IMR-90 (cell line): ENCODE measurements at regions of chr2 and their contacts with region 1.

Region 1: GRCh38 chr2:102020596-102021181 is 28.9 kb downstream of the IL1R2 start:
- DNase-seq: peak; percentile 88
- ATAC-seq: peak; percentile 99
- H3K4me3 ChIP-seq: no peak overlapping the region
- H3K27ac ChIP-seq: peak overlapping the region; percentile 31; the same call in 1 of the 2 replicates
- H3K4me1 ChIP-seq: peaks cover 9% of the 10 kb centered on the region; the same call in 1 of the 2 replicates
- H3K27me3 ChIP-seq: no peaks in the 10 kb centered on the region
- CTCF ChIP-seq: peak; percentile 99
- POLR2A ChIP-seq: peak; percentile 62
- RAD21 ChIP-seq: peak; percentile 99

Region 2: DNA sequence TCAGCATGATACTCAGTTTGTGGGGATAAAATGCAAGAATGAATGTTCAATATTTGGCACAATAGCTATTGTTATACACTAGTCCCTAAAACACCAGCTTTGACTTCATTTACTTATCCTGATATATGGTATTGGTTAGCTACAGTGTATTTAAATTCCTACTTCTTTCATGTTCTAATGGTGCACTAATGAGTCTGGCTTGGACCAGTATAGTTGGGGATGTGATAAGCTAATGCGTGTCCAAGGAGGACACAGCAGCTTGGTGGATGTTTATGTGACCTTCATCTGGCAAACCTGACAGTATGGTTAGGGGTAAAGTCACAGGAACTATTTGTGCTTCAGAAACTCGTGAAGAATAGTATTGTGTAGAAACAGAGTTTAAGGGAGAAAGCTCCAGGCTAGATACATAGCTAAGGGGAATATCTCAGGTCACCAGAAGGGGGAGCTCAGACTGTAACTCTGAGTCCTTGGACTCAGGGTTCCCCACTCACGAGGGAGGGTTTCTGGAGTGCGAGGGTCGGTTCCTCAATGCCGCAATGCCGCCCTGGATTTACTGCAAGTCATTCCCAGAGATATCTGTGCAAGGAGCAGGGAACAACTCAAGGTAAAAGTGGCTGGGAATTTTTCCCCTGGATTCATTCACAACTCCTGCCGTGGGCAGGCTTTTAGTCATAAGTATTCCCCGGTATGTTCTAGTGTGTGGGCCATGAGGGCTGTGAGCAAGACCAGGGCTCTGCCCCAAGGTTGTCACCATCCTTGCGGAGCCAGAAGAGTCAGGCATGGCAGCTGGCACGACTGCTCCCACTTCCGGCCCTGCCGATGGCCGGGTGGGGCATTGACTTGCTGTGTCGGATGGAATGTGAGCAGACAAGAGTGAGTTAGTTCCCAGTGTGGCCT is 14.5 kb before region 1 on chr2:
- CTCF ChIA-PET with region 1: interaction called, 14 read pairs
- POLR2A ChIA-PET with region 1: no interaction called
- dilution Hi-C with region 1: no loop called
- in situ Hi-C with region 1: no loop called
- intact Hi-C with region 1: no loop called
- DNase-seq: peak; percentile 56
- ATAC-seq: peak; percentile 97
- H3K4me3 ChIP-seq: no peak overlapping the region
- H3K27ac ChIP-seq: no peak overlapping the region
- H3K4me1 ChIP-seq: no peaks in the 10 kb centered on the region
- H3K27me3 ChIP-seq: peaks cover 5% of the 10 kb centered on the region; the same call in 1 of the 2 replicates
- CTCF ChIP-seq: peak; percentile 68
- POLR2A ChIP-seq: no peak
- RAD21 ChIP-seq: peak; percentile 73

Region 3: DNA sequence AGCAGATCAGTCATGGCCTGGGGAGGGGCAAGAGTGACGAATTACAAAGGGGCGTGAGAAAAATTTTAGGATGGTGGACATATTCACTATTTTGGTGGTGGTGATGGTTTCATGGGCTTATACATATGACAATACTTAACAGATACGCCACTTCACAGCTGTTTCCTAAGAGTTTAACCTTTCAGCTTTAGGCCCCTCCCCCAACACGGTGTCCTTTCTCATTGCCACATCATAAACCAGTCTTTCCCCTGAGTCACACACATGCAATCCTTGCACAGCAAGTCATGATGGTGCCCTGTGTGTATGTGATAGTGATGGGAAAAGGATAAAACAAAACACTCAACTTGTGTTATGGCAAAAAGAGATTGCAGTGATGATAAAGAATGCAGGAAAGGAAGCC is 74.2 kb after region 1 on chr2:
- CTCF ChIA-PET with region 1: no interaction called
- POLR2A ChIA-PET with region 1: no interaction called
- dilution Hi-C with region 1: no loop called
- in situ Hi-C with region 1: no loop called
- intact Hi-C with region 1: no loop called
- DNase-seq: peak; percentile 98
- ATAC-seq: peak; percentile 99
- H3K4me3 ChIP-seq: no peak overlapping the region
- H3K27ac ChIP-seq: no peak overlapping the region; the same call in 1 of the 2 replicates
- H3K4me1 ChIP-seq: peaks cover 2% of the 10 kb centered on the region; the same call in 1 of the 2 replicates
- H3K27me3 ChIP-seq: no peaks in the 10 kb centered on the region
- CTCF ChIP-seq: no peak
- POLR2A ChIP-seq: no peak
- RAD21 ChIP-seq: peak; percentile 28; the same call in 1 of the 2 replicates

Region 4: GRCh38 chr2:102122110-102122509 is 101.4 kb after region 1 on chr2:
- CTCF ChIA-PET with region 1: interaction called, 3 read pairs
- POLR2A ChIA-PET with region 1: no interaction called
- dilution Hi-C with region 1: no loop called
- in situ Hi-C with region 1: no loop called
- intact Hi-C with region 1: loop called (anchors 5 kb)
- DNase-seq: peak; percentile 95
- ATAC-seq: peak; percentile 91
- H3K4me3 ChIP-seq: no peak overlapping the region
- H3K27ac ChIP-seq: peak overlapping the region; percentile 89
- H3K4me1 ChIP-seq: peaks cover 20% of the 10 kb centered on the region
- H3K27me3 ChIP-seq: no peaks in the 10 kb centered on the region
- CTCF ChIP-seq: no peak
- POLR2A ChIP-seq: peak; percentile 60; the same call in 1 of the 2 replicates
- RAD21 ChIP-seq: peak; percentile 17; the same call in 1 of the 2 replicates

Region 5: GRCh38 chr2:102166189-102166845 is 145.6 kb after region 1 on chr2:
- CTCF ChIA-PET with region 1: interaction called, 22 read pairs
- POLR2A ChIA-PET with region 1: no interaction called
- dilution Hi-C with region 1: loop called (anchors 25 kb)
- in situ Hi-C with region 1: no loop called
- intact Hi-C with region 1: loop called (anchors 1 kb)
- DNase-seq: peak; percentile 69
- ATAC-seq: peak; percentile 85
- H3K4me3 ChIP-seq: no peak overlapping the region
- H3K27ac ChIP-seq: no peak overlapping the region
- H3K4me1 ChIP-seq: peaks cover 4% of the 10 kb centered on the region; the same call in 1 of the 2 replicates
- H3K27me3 ChIP-seq: no peaks in the 10 kb centered on the region
- CTCF ChIP-seq: peak; percentile 59
- POLR2A ChIP-seq: 0 out of 2 replicates have a peak, but pooled peaks have one; percentile 24
- RAD21 ChIP-seq: peak; percentile 75

Region 6: DNA sequence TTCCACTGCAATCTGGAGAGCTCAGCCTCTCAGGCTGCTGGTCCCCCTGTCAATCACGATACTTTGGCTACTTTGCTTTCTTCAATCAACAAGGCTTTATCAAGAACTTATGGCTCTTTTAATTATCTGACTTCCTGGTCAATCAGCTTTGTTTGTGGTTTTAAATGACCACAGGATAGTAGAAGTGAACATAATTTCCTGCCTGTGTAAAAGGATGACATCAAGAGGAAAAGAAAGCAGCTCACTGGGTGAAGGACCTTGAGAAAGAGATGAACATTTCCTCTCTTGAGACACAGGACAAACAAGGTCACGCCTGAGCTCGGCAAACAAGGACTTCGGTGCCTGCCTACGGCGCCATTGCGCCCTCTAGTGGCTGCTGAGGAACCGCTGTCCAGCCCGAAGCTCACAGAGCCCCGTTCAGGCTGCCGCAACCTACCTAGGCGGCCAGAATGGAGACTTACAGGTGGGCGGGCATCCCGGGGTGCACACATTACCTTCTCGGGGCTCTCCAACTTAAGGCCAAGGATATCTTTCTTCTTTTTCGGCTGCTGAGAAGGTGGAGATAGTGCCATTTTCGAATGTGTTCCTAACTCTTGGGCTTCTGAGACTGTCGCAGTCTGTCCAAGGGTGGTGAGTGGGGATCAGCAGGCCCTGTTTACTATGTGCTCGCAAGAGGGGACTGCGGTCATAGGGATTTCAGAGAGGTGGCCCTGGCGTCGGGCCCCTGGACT is 220.1 kb after region 1 on chr2:
- CTCF ChIA-PET with region 1: interaction called, 26 read pairs
- POLR2A ChIA-PET with region 1: no interaction called
- dilution Hi-C with region 1: no loop called
- in situ Hi-C with region 1: loop called (anchors 5 kb)
- intact Hi-C with region 1: loop called (anchors 1 kb)
- DNase-seq: peak; percentile 97
- ATAC-seq: peak; percentile 96
- H3K4me3 ChIP-seq: no peak overlapping the region
- H3K27ac ChIP-seq: peak overlapping the region; percentile 36; the same call in 1 of the 2 replicates
- H3K4me1 ChIP-seq: peaks cover 8% of the 10 kb centered on the region
- H3K27me3 ChIP-seq: no peaks in the 10 kb centered on the region
- CTCF ChIP-seq: peak; percentile 98
- POLR2A ChIP-seq: peak; percentile 36; the same call in 1 of the 2 replicates
- RAD21 ChIP-seq: peak; percentile 99

Region 7: DNA sequence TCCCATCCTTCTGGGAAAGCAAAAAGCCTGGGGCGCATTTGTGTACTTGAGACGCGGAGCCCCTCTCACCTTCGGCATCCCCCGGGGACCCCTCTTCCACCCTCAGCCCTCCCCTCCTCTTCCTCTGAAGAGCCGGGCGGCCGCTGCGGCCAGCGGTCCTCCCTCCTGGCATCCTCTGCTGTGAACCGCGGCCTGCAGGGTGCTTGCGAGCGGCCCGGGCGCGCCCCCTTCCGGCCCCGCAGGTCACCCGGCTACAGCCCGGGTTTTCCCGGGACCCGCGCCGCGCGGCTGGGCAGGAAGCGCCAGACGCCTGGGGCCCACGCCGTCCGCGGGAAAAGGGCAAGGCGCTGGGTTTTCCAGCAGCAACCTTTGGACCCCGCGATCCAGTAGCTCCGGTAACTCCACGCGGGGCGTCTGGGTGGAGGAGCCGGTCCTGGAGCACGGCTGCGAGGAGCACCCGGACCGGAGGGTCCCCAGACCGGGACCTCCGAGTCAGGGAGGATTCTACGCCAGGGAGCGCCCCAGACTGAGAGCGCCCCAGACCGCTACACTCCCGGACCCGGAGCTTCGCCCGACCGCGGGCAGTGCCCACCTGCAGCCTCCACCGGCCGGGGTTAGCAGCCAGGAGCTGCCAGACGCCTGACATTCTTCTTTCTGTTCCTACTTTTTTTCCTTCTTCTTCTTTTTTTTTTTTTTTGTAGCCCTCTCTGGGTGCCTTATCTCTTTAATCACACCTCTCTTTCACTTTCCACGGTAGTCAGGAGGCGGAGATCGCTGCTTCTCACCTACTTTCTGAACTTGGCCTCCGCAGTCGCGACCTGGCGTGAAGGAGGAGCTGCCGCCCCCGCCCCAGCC is 335.1 kb after region 1 on chr2 and contains the start of gene IL18R1:
- CTCF ChIA-PET with region 1: interaction called, 3 read pairs
- POLR2A ChIA-PET with region 1: no interaction called
- dilution Hi-C with region 1: no loop called
- in situ Hi-C with region 1: loop called (anchors 5 kb)
- intact Hi-C with region 1: loop called (anchors 5 kb)
- DNase-seq: peak; percentile 69
- ATAC-seq: peak; percentile 100
- H3K4me3 ChIP-seq: peak within 1 kb of the TSS; percentile 83
- H3K27ac ChIP-seq: peak within 1 kb of the TSS; percentile 65; the same call in 1 of the 2 replicates
- H3K4me1 ChIP-seq: peaks cover 2% of the 10 kb centered on the region; the same call in 1 of the 2 replicates
- H3K27me3 ChIP-seq: 0 out of 2 replicates have a peak, but pooled peaks cover 2% of the 10 kb centered on the region
- CTCF ChIP-seq: peak; percentile 90
- POLR2A ChIP-seq: no peak; the same call in 1 of the 2 replicates
- RAD21 ChIP-seq: peak; percentile 88
- total RNA-seq, gene IL18R1: 0.18 and 0.28 TPM in 2 replicates

Region 8: DNA sequence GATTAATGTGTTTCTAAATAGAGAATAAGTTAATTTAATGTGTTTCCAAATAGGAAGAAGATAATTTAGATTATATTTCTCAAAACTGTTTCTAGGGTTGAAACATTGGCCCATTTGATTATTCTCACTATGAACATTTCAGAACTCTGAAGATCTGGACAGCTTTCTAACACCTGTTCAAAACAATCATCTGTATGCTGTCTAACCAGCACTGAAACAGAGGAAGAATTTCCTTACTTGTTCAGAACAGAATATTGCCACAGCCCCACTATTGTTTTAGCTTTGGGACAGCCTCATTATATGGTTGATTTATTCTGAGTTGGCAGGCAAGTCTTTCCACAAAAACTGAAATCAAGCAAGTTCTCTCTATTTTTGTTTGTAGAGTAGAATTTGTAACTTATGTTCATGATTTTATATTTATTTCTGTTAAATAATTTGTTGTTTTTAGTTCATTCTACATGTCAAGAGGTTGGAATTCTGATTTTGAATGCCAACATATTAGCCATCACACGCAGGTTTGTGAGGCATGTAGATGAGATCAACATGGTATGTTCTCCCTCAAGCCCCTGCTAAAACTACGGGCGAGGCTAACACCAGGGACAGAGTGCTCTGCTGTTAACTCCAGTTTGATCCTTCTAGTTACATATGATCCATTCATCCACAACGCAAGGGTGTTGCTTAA is 413.4 kb after region 1 on chr2:
- CTCF ChIA-PET with region 1: no interaction called
- POLR2A ChIA-PET with region 1: no interaction called
- dilution Hi-C with region 1: no loop called
- in situ Hi-C with region 1: no loop called
- intact Hi-C with region 1: no loop called
- DNase-seq: no peak
- ATAC-seq: no peak
- H3K4me3 ChIP-seq: no peak overlapping the region
- H3K27ac ChIP-seq: no peak overlapping the region
- H3K4me1 ChIP-seq: 0 out of 2 replicates have a peak, but pooled peaks cover 2% of the 10 kb centered on the region
- H3K27me3 ChIP-seq: peaks cover 6% of the 10 kb centered on the region
- CTCF ChIP-seq: no peak
- POLR2A ChIP-seq: no peak
- RAD21 ChIP-seq: no peak

Region 9: DNA sequence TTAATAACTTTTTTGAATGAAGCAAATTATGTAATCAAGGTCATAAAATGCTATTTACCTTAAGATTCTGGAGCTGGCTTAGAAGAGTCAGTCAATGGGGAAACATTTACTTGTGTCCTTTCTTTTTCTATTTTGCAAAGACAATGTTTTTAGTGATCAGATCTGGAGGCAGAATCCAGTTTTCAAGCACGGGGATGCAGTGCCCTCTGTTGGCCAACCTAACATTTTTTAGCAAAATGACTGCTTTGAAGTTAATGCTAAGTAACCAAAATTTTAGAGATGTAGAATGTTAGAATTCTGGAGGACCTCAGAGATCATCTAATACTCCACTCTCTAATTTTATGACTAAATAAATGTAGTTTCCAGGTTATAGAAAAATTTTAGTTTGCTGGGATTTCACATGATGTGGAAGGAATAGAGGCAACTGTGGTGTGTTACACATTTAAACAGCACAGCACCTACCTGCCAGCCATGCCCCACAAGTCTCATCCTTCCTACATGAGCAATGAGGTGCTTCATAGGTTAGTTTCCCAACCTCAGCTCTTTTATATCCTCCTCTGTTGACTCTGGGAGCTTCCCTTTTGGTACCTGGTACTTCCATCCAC is 428.8 kb after region 1 on chr2:
- CTCF ChIA-PET with region 1: no interaction called
- POLR2A ChIA-PET with region 1: interaction called, 3 read pairs
- dilution Hi-C with region 1: no loop called
- in situ Hi-C with region 1: loop called (anchors 5 kb)
- intact Hi-C with region 1: loop called (anchors 1 kb)
- DNase-seq: peak; percentile 47
- ATAC-seq: peak; percentile 75
- H3K4me3 ChIP-seq: no peak overlapping the region
- H3K27ac ChIP-seq: no peak overlapping the region
- H3K4me1 ChIP-seq: no peaks in the 10 kb centered on the region
- H3K27me3 ChIP-seq: peaks cover 12% of the 10 kb centered on the region
- CTCF ChIP-seq: peak; percentile 83
- POLR2A ChIP-seq: 0 out of 2 replicates have a peak, but pooled peaks have one; percentile 24
- RAD21 ChIP-seq: peak; percentile 85

Region 10: DNA sequence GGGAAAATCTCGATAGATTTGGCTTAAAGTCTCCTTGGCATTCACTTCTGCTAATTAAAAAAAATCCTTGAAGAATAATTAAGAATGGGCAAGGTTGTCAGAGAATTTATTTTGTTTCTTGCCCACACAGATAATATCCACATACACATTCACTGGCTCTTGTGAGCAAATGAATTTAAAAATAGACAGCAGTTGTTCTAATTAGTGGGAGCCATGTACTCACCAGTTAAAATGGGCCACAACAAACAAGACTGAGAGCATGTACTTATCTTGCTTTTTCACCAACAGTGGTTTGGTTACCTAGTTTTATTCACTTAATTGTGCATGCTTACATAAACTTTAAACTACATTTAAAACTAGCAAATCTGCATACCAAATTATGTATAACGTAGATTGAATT is 794.6 kb after region 1 on chr2:
- CTCF ChIA-PET with region 1: no interaction called
- POLR2A ChIA-PET with region 1: no interaction called
- dilution Hi-C with region 1: no loop called
- in situ Hi-C with region 1: no loop called
- intact Hi-C with region 1: no loop called
- DNase-seq: no peak
- ATAC-seq: no peak
- H3K4me3 ChIP-seq: no peak overlapping the region
- H3K27ac ChIP-seq: no peak overlapping the region
- H3K4me1 ChIP-seq: no peaks in the 10 kb centered on the region
- H3K27me3 ChIP-seq: no peaks in the 10 kb centered on the region
- CTCF ChIP-seq: no peak
- POLR2A ChIP-seq: no peak
- RAD21 ChIP-seq: no peak